Activated CD8-positive, alpha-beta T cell treated with anti-CD3 and anti-CD28 coated beads for 36 hours (primary cell): ENCODE measurements at regions of chr11 and their contacts with region 1.

Region 1: GRCh38 chr11:9972989-9973388 is 309.1 kb downstream of the SWAP70 start:
- DNase-seq: peak; percentile 49
- ATAC-seq: peak; percentile 83
- H3K4me3 Mint-ChIP-seq: no peak overlapping the region
- H3K27ac Mint-ChIP-seq: no peak overlapping the region
- H3K4me1 Mint-ChIP-seq: peaks cover 2% of the 10 kb centered on the region
- H3K27me3 Mint-ChIP-seq: no peaks in the 10 kb centered on the region
- CTCF ChIP-seq: peak; percentile 71

Region 2: DNA sequence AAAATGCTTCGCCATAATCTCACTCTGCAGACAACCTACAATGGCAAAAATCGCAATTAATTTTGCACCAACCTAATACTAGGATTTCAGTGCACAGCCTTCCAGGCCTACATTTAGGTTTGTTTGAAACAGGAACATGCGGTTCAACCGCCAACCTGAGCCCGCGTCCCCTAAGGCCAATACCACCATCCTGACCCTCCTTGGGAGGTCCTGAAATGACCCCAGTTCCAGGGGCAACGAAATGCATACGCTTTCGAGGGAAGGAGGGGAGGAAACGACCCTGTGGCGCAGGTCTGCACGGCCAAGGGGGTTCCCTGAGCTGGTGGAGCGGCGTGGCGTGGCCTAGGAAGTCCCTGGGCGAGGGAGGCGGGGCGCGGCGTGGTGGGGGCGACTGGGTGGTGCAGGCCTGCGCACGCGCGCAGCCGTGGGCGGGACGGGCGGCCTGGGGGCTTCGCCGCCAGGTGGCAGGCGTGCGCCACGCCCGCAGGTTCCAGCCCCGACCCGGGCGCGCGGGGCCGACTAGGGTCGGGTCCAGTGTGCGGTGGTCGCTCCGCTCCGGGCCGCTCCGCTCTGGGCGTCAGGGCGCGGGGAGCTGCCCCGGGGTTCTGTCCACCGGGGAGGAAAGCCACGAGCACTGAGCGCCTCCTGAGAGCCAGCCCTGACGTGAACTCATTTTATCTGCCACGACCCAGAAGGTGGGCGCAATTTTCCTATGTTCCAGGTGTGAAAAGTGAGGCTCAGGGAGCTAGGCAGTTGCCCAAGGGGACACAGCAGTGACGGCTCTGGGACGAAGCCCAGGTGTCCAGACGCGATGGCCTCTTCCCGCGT is 215.0 kb before region 1 on chr11:
- CTCF ChIA-PET with region 1: interaction called, 49 read pairs
- POLR2A ChIA-PET with region 1: no interaction called
- intact Hi-C with region 1: loop called (anchors 2 kb)
- DNase-seq: peak; percentile 95
- ATAC-seq: peak; percentile 64
- H3K4me3 Mint-ChIP-seq: peak overlapping the region; percentile 88
- H3K27ac Mint-ChIP-seq: peak overlapping the region; percentile 87
- H3K4me1 Mint-ChIP-seq: peaks cover 53% of the 10 kb centered on the region
- H3K27me3 Mint-ChIP-seq: no peaks in the 10 kb centered on the region
- CTCF ChIP-seq: peak; percentile 93

Region 3: GRCh38 chr11:9914064-9914463 is 58.9 kb before region 1 on chr11:
- CTCF ChIA-PET with region 1: no interaction called
- POLR2A ChIA-PET with region 1: no interaction called
- intact Hi-C with region 1: no loop called
- DNase-seq: no peak
- ATAC-seq: no peak
- H3K4me3 Mint-ChIP-seq: no peak overlapping the region
- H3K27ac Mint-ChIP-seq: no peak overlapping the region
- H3K4me1 Mint-ChIP-seq: no peaks in the 10 kb centered on the region
- H3K27me3 Mint-ChIP-seq: no peaks in the 10 kb centered on the region
- CTCF ChIP-seq: no peak

Region 4: DNA sequence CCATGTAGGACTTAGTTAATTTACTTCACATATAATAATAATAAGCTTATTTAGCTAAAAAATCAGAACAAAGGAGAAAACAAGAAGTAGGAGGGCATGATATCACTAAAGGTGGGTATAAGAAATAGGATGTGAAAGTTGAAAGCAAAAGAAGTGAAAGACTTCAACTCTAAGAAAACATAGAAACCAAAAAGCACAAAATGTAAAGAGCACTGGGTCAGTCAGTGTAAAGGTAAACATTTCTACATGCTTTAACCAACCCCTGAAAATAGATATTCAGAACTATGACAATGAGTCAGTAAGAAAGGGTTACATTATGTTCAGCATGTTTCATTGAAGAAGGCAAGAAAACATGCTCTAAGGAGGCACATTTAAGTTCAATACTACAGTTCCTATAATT is 10.3 kb before region 1 on chr11:
- CTCF ChIA-PET with region 1: interaction called, 14 read pairs
- POLR2A ChIA-PET with region 1: no interaction called
- intact Hi-C with region 1: no loop called
- DNase-seq: no peak
- ATAC-seq: no peak
- H3K4me3 Mint-ChIP-seq: no peak overlapping the region
- H3K27ac Mint-ChIP-seq: no peak overlapping the region
- H3K4me1 Mint-ChIP-seq: no peaks in the 10 kb centered on the region
- H3K27me3 Mint-ChIP-seq: no peaks in the 10 kb centered on the region
- CTCF ChIP-seq: no peak

Region 5: GRCh38 chr11:9982800-9983579 is 10.0 kb after region 1 on chr11:
- CTCF ChIA-PET with region 1: interaction called, 12 read pairs
- POLR2A ChIA-PET with region 1: no interaction called
- intact Hi-C with region 1: no loop called
- DNase-seq: no peak
- ATAC-seq: no peak
- H3K4me3 Mint-ChIP-seq: no peak overlapping the region
- H3K27ac Mint-ChIP-seq: no peak overlapping the region
- H3K4me1 Mint-ChIP-seq: peaks cover 2% of the 10 kb centered on the region
- H3K27me3 Mint-ChIP-seq: no peaks in the 10 kb centered on the region
- CTCF ChIP-seq: no peak

Region 6: GRCh38 chr11:10012068-10012467 is 39.1 kb after region 1 on chr11:
- CTCF ChIA-PET with region 1: no interaction called
- POLR2A ChIA-PET with region 1: no interaction called
- intact Hi-C with region 1: no loop called
- DNase-seq: no peak
- ATAC-seq: no peak
- H3K4me3 Mint-ChIP-seq: no peak overlapping the region
- H3K27ac Mint-ChIP-seq: no peak overlapping the region
- H3K4me1 Mint-ChIP-seq: no peaks in the 10 kb centered on the region
- H3K27me3 Mint-ChIP-seq: no peaks in the 10 kb centered on the region
- CTCF ChIP-seq: no peak

Region 7: DNA sequence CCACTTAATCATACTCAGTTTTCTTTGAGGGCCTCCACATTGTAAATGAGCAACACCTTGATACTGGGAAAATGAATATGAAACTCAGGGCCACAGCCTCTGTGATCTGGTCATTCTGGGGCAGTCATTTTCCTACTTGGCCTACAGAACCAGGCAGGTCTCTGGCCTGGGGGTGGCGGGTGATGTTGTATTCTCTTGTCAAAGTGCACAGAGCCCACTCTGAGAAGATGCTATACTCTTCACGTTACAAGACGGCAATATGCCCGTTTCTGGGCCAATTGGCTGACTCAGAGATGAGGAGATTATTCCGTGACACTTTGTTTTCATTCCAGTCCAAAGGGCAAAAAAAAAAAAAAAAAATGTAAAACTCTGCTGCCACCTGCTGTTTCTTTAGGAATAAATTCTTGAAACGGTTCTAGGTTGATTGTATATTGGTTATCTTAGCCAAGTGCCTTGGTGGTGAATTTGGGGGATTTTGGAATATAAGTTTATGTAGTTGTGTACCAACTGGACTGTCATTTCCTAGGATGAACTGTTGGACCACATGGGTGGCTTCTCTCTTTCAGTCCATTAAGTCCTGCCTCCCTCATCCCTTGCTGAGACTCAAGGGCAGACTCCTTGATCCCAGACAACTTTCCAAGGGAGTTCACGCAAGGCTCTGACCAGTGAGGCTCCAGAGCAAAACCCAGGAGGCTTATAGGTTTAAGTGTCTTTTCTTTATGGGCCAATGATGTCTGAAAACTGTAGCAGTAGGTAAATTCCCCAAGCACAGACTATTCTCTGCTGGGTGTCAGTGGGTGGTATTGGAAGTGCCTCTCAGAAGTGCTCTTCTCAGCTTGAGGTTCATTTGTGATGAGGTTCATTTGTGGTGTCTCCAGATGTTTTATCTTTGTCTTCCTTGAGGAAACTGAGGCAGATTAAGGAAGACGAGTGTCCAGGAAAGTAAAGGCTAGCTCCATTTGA is 350.1 kb after region 1 on chr11:
- CTCF ChIA-PET with region 1: interaction called, 6 read pairs
- POLR2A ChIA-PET with region 1: no interaction called
- intact Hi-C with region 1: loop called (anchors 10 kb)
- DNase-seq: peak; percentile 73
- ATAC-seq: peak; percentile 78
- H3K4me3 Mint-ChIP-seq: peak overlapping the region; percentile 32
- H3K27ac Mint-ChIP-seq: peak overlapping the region; percentile 86
- H3K4me1 Mint-ChIP-seq: peaks cover 20% of the 10 kb centered on the region
- H3K27me3 Mint-ChIP-seq: peaks cover 7% of the 10 kb centered on the region
- CTCF ChIP-seq: peak; percentile 72